AG04449 (cell line): ENCODE measurements at regions of chr10 and their contacts with region 1.

Region 1: DNA sequence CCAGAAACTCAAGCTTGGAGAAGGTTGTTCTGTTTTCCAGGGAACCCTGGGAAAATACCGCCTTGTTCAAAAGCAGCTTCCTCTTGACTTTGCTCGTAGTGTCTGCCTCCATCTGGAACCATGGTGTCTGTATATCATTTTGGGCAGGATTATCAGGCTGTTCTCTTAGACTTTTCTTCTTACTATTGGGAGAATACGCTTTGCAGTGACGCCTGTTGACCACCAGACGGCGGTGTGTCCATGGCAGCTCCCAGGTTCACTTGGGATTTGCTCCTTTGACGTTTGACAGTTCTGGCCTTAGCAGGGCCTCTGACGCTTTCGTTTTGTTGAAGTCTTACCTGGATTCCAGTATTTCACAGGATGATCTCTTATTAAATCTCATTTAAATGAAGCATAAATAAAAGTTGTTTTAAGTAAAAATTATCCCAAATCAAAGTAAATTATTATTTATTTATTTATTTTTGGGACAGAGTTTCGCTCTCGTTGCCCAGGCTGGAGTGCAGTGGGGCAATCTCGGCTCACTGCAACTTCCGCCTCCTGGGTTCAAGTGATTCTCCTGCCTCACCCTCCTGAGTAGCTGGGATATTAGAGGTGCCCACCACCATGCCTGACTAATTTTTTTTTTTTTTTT is 41.8 kb upstream of the GJD4 start:
- DNase-seq: no peak
- H3K4me3 ChIP-seq: no peak overlapping the region
- CTCF ChIP-seq: peak; percentile 95

Region 2: GRCh38 chr10:35236739-35237138 is 326.6 kb before region 1 on chr10:
- CTCF ChIA-PET with region 1: interaction called, 17 read pairs
- POLR2A ChIA-PET with region 1: no interaction called
- DNase-seq: no peak
- H3K4me3 ChIP-seq: no peak overlapping the region
- CTCF ChIP-seq: peak; percentile 16

Region 3: DNA sequence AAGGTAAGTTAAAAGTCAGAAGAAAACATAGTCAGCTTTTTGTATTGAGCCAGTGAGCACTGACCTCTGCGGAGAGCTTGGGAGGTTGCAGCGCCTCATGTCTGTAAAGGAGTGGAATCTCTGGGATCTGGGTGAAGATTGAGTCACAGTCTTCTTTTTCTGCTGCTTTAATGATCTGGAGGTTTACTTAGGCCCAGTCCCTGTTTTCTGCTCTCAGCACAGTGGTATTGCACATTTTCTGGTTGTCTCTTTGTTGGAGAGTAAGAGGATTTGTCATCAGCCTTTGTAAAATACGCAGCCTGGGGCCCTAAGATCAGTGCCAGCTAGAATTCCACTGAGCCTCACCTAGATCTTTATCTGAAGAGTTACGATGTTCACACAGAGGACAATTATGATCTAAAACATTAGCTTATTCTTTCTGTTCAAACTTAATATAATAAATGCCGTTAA is 16.5 kb before region 1 on chr10:
- CTCF ChIA-PET with region 1: interaction called, 73 read pairs
- POLR2A ChIA-PET with region 1: interaction called, 3 read pairs
- DNase-seq: peak; percentile 67
- H3K4me3 ChIP-seq: no peak overlapping the region
- CTCF ChIP-seq: no peak

Region 4: DNA sequence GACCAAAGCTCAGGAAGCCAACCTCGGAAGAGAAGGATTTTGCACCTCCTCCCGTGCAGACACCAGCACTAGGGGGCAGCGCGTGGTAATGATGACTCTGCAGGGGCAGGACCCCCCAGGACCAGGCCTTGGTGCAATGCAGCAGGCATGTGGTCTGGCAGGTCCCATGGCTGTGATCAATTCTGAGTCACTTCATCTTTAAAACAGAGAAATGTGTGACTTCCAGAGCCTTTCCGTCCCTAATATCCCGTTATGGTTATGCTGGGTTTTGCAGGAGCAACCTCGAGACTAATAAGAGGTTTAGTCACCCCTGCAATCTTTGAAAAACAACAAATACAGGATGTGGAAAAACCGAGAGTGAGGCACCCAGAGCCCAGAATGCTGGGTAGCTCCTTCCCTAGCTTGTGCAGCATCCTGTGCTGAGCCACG is 11.6 kb after region 1 on chr10:
- CTCF ChIA-PET with region 1: interaction called, 89 read pairs
- POLR2A ChIA-PET with region 1: interaction called, 3 read pairs
- DNase-seq: peak; percentile 86
- H3K4me3 ChIP-seq: no peak overlapping the region
- CTCF ChIP-seq: peak; percentile 57

Region 5: GRCh38 chr10:35594115-35595079 is 31.0 kb after region 1 on chr10:
- CTCF ChIA-PET with region 1: interaction called, 16 read pairs
- POLR2A ChIA-PET with region 1: no interaction called
- DNase-seq: no peak
- H3K4me3 ChIP-seq: no peak overlapping the region
- CTCF ChIP-seq: no peak